Activated naive CD4-positive, alpha-beta T cell treated with anti-CD3 and anti-CD28 coated beads for 36 hours (primary cell): ENCODE measurements at regions of chr13 and their contacts with region 1.

Region 1: DNA sequence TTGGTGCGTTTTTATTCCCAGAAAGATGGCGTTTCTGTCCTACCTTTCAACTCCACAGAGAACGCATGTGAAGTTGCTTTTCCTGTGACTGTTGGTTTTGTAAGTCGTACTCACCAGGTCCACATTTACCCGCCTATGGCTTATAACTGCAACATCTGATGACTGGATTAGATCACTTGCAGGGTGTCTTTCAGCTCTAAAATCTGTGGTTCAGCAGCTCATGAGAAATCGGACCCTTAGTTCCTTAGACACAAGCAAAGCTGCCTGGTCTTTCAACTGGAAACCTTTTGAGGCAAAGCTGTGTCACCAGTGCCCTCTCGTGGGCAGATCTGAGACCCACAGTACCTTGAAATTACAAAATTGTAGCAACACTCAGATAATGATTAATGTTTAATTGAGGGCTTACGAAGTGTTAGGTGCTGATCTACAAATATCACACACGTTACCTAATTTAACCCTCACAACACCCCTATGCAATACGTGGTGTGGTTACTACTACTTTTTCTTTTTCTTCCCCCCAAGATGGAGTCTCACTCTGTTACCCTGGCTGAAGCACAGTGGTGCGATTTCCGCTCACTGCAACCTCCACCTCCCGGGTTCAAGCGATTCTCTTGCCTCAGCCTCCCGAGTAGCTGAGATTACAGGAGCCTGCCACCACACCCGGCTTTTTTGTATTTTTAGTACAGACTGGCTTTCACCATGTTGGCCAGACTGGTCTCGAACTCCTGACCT is 65.4 kb downstream of the RUBCNL start:
- DNase-seq: peak; percentile 89
- H3K4me3 Mint-ChIP-seq: peak overlapping the region; percentile 81
- H3K27ac Mint-ChIP-seq: peak overlapping the region; percentile 93
- H3K4me1 Mint-ChIP-seq: peaks cover 36% of the 10 kb centered on the region
- H3K27me3 Mint-ChIP-seq: no peaks in the 10 kb centered on the region

Region 2: DNA sequence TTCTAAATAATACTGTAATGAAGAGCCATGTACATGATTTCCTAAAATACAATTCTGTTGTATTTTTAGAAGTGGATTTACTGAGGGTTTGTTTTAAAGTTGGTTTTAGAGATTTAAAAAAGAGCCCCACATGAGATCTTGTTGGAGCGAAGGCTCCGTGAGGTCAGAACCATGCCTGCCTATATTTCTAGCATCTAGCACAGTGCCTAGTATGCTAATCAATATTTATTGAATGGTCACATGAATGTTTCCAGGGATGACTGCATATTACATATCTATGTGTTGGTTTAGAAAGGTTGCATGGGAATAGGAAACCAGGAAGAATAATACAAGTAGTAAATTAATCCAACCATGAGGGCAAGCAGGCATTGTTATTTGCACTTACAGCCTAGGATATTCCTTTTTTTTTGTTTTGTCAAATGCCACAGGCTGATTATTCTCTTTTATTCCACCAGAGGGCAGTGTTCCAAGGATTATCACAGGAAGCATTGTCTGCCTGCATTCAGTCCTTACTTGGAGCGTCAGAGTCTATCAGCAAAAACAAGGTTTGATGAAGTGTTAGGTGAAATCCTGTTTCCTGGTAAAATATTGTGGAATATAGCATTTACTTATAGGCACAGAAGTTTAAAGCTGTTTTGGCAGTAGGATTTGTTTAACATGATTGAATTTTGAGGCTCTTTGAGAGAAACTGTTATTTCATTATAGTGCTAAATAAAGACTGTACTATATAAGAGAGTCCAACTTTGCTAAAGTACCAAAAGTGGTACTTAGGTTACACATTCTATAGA is 810.2 kb before region 1 on chr13:
- CTCF ChIA-PET with region 1: interaction called, 6 read pairs
- intact Hi-C with region 1: loop called (anchors 2 kb)
- DNase-seq: peak; percentile 30
- H3K4me3 Mint-ChIP-seq: no peak overlapping the region
- H3K27ac Mint-ChIP-seq: no peak overlapping the region
- H3K4me1 Mint-ChIP-seq: peaks cover 8% of the 10 kb centered on the region
- H3K27me3 Mint-ChIP-seq: no peaks in the 10 kb centered on the region

Region 3: DNA sequence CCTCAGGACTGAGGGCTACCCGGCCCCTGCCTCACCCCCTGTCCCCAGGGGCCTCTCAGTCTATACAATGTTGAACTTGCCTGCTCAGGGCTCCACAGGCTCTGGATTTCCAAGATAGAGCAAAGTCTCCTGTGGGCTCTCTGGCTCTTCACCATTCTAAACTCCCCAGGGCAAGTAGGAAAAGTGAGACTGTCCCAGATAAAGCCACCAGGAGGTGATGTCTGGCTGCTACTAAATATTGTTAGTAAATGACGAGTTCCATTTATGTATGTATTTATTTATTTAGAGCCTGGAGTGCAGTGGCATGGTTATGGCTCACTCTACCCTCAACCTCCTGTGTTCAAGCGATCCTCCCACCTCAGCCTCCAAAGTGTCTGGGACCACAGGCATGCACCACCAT is 396.5 kb before region 1 on chr13:
- CTCF ChIA-PET with region 1: no interaction called
- intact Hi-C with region 1: loop called (anchors 2 kb)
- DNase-seq: peak; percentile 16
- H3K4me3 Mint-ChIP-seq: no peak overlapping the region
- H3K27ac Mint-ChIP-seq: no peak overlapping the region
- H3K4me1 Mint-ChIP-seq: no peaks in the 10 kb centered on the region
- H3K27me3 Mint-ChIP-seq: no peaks in the 10 kb centered on the region

Region 4: DNA sequence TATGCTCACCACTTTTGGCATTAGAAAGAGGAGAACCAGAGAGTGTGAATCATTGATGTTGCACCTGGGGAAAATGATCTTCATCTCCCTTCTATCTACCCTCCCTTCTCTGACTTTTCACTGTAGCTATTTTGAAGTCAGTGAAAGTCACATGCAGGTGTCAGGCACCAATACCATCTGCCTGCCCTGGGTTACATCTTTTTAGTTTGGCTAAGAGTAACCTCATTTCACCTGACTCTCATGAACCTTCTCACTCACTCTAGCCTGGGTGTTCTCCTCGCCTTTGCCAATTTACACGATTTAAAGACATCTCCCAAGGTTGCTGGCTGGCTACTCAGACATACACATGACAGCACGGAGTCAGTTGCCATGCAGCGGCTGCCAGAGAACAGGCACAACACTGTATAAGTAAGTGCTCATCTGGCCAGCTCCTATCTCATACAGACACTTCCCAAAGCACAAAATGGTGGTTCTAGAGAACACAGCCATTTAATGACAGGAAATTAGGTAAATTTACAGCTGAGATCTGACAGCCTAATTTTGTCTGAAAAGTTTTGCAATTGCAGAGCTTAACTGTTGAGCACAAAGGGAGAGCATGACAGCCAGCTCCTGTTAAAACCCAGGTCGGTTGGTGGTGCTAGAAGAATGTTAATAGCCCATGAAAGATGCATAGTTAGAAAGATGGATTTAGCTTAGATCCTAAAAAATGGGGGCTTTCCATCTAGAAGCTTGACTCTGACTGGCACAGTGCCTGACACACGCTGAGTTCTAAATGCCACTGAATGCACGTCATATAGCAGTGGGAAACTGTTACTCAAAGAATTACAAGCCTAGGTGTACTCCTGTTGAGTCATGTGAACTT is 172.2 kb before region 1 on chr13:
- CTCF ChIA-PET with region 1: interaction called, 7 read pairs
- intact Hi-C with region 1: loop called (anchors 1 kb)
- DNase-seq: peak; percentile 81
- H3K4me3 Mint-ChIP-seq: no peak overlapping the region
- H3K27ac Mint-ChIP-seq: peak overlapping the region; percentile 89
- H3K4me1 Mint-ChIP-seq: peaks cover 51% of the 10 kb centered on the region
- H3K27me3 Mint-ChIP-seq: no peaks in the 10 kb centered on the region

Region 5: DNA sequence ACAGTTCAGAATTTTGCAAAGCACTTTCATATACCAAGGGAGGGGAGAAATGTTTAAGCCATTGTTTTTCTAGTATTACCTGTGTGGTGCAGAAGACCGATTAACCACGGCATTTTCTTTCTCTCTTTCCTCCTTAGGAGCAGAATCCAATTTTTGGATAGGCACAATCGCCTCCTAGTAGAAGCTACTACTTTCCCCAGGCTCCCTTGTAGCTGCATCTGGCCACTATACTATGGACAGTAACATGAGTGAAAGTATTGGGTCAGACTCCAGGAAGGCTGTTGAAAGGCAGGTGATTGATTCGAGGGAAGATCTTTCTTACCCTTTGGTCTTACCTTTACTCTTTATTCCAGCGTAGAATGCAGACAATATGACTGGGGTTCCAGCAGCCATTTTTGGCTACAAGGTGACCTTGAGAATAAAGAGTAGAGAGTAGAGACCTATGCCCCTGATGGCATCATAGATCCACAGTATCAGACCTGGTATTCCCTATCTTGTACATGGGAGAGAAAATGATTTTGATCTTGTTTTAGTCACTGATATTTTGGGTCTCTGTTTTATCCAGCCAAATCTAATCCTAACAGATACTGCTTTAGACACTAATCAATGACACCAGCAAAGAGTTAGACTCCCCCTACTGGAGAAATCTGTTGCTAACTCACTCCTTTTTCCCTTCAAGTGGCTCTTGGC is 32.9 kb before region 1 on chr13:
- CTCF ChIA-PET with region 1: interaction called, 19 read pairs
- intact Hi-C with region 1: loop called (anchors 1 kb)
- DNase-seq: no peak
- H3K4me3 Mint-ChIP-seq: no peak overlapping the region
- H3K27ac Mint-ChIP-seq: no peak overlapping the region
- H3K4me1 Mint-ChIP-seq: peaks cover 17% of the 10 kb centered on the region
- H3K27me3 Mint-ChIP-seq: no peaks in the 10 kb centered on the region

Region 6: GRCh38 chr13:46387064-46387851 is 65.6 kb after region 1 on chr13 and contains the start of gene RUBCNL:
- CTCF ChIA-PET with region 1: interaction called, 6 read pairs
- intact Hi-C with region 1: loop called (anchors 1 kb)
- DNase-seq: peak; percentile 77
- H3K4me3 Mint-ChIP-seq: peak within 1 kb of the TSS; percentile 77
- H3K27ac Mint-ChIP-seq: no peak within 1 kb of the TSS
- H3K4me1 Mint-ChIP-seq: peaks cover 22% of the 10 kb centered on the region
- H3K27me3 Mint-ChIP-seq: peaks cover 28% of the 10 kb centered on the region
- total RNA-seq, gene RUBCNL: 3.6 to 3.7 TPM